Activated CD8-positive, alpha-beta T cell treated with anti-CD3 and anti-CD28 coated beads for 36 hours (primary cell): ENCODE measurements at regions of chr15 and their contacts with region 1.

Region 1: DNA sequence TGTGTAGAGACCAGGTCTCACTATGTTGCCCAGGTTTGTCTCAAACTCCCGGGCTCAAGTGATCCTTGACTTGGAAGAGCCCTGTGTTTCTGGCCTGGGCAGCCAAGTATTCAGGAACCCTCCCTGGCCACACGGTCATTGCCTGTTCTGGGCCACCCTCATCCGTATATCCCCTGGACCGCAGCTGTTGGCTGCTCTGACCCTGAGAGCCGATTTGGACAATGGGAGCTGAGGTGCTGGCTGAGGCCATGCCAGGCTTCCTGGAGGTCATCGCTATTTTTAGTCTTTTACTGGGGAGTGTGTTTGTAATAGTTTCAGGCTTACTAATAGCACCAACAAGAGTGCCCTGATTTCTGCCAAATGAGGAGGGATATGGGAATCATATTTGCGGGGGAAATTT is 60.7 kb downstream of the ADAMTS7 start:
- DNase-seq: no peak
- ATAC-seq: no peak
- H3K4me3 Mint-ChIP-seq: no peak overlapping the region
- H3K27ac Mint-ChIP-seq: no peak overlapping the region
- H3K4me1 Mint-ChIP-seq: peaks cover 4% of the 10 kb centered on the region
- H3K27me3 Mint-ChIP-seq: no peaks in the 10 kb centered on the region
- CTCF ChIP-seq: no peak

Region 2: GRCh38 chr15:78739996-78740903 is 10.3 kb before region 1 on chr15:
- CTCF ChIA-PET with region 1: interaction called, 10 read pairs
- POLR2A ChIA-PET with region 1: no interaction called
- intact Hi-C with region 1: no loop called
- DNase-seq: peak; percentile 83
- ATAC-seq: peak; percentile 86
- H3K4me3 Mint-ChIP-seq: no peak overlapping the region
- H3K27ac Mint-ChIP-seq: no peak overlapping the region
- H3K4me1 Mint-ChIP-seq: no peaks in the 10 kb centered on the region
- H3K27me3 Mint-ChIP-seq: peaks cover 7% of the 10 kb centered on the region
- CTCF ChIP-seq: peak; percentile 55

Region 3: DNA sequence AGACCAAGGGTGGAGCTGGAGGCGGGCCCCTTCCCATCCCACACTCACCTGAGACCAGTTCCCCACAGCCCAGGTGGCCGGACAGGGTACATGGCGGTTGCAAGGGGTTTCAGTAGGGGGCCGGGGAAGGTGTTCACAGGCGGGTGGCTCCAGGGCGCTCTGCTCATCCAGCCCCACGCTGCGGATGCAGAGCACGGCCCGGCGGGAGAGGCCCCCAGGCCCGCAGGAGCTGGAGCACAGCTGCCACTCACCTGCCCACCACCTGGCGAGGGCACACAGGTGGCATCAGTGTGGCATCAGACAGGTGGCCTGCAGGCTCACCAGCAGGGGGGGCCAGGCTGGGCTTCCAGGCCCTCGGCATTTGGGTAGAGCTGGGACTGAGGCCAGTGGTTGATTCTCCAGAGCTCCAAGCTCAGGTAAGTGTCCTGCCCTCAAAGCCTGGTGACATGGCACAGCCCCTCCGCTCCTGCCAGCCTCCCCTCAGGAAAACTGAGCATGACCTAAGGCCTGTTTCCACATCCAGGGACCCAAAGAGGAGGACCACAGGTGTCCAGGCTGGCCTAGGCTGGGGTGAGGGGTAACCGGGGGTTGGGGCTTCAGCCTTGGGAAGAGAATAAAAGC is 16.9 kb after region 1 on chr15:
- CTCF ChIA-PET with region 1: no interaction called
- POLR2A ChIA-PET with region 1: no interaction called
- intact Hi-C with region 1: no loop called
- DNase-seq: no peak
- ATAC-seq: no peak
- H3K4me3 Mint-ChIP-seq: no peak overlapping the region
- H3K27ac Mint-ChIP-seq: no peak overlapping the region
- H3K4me1 Mint-ChIP-seq: peaks cover 3% of the 10 kb centered on the region
- H3K27me3 Mint-ChIP-seq: no peaks in the 10 kb centered on the region
- CTCF ChIP-seq: no peak